Caco-2 (cell line): ENCODE measurements at regions of chr1 and their contacts with region 1.

Region 1: GRCh38 chr1:156356875-156357534 is 12.0 kb upstream of the RHBG start:
- DNase-seq: peak; percentile 87 to 90
- H3K4me3 ChIP-seq: peak overlapping the region; percentile 19
- H3K4me3 Mint-ChIP-seq: peak overlapping the region; percentile 67
- H3K27ac Mint-ChIP-seq: peak overlapping the region; percentile 60
- H3K4me1 ChIP-seq: 0 out of 2 replicates have a peak, but pooled peaks cover 3% of the 10 kb centered on the region
- H3K4me1 Mint-ChIP-seq: peaks cover 9% of the 10 kb centered on the region
- H3K27me3 ChIP-seq: no peaks in the 10 kb centered on the region
- H3K27me3 Mint-ChIP-seq: no peaks in the 10 kb centered on the region
- CTCF ChIP-seq: peak; percentile 93 to 99

Region 2: DNA sequence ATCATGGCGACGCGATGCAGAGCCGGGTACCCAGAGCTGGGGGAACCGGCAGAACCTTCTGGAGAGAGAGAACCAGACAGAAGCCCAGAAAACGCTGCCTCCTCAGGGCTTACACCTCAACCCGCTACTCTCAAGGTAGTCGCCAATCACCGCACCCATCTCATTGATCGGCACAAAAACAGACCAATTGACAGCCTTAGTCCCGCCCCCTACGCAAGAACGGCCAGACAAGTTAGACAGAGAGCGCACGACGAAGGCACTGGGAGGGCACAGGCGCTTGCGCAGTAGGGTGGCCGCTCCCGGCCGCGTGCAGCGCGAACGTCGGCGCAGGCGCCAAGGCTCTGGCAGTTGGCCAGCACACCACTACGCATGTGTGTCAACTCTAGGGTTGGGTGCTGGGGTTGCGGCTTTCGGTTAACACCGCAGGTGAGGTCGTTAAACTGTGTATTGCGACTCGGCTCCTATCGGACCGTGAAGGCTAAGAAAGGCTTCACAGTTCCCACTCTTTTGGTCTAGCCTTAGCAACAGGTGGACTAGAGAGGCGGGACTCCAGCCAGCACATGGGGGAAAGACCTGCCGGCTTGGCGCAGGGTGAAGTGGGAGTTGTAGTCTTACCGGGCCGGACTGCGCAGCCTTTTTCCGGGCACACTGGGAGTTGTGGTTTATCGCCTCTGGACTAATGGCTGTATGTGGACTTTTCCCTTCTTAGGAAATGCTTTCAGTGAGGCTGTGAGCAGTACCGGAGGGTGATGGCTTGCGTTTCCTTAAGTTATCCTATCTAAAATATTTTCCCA is 18.6 kb before region 1 on chr1 and contains the starts of genes CCT3 and TSACC:
- CTCF ChIA-PET with region 1: no interaction called
- POLR2A ChIA-PET with region 1: no interaction called
- intact Hi-C with region 1: loop called (anchors 1 kb)
- DNase-seq: peak; percentile 99 to 100
- H3K4me3 ChIP-seq: peak within 1 kb of the TSS; percentile 90
- H3K4me3 Mint-ChIP-seq: peak within 1 kb of the TSS; percentile 97
- H3K27ac Mint-ChIP-seq: peak within 1 kb of the TSS; percentile 75
- H3K4me1 ChIP-seq: no peaks in the 10 kb centered on the region
- H3K4me1 Mint-ChIP-seq: no peaks in the 10 kb centered on the region
- H3K27me3 ChIP-seq: no peaks in the 10 kb centered on the region
- H3K27me3 Mint-ChIP-seq: no peaks in the 10 kb centered on the region
- CTCF ChIP-seq: no peak
- total RNA-seq, gene CCT3: 340 and 380 TPM in 2 replicates
- total RNA-seq, gene TSACC: 2.8 and 3.9 TPM in 2 replicates

Region 3: DNA sequence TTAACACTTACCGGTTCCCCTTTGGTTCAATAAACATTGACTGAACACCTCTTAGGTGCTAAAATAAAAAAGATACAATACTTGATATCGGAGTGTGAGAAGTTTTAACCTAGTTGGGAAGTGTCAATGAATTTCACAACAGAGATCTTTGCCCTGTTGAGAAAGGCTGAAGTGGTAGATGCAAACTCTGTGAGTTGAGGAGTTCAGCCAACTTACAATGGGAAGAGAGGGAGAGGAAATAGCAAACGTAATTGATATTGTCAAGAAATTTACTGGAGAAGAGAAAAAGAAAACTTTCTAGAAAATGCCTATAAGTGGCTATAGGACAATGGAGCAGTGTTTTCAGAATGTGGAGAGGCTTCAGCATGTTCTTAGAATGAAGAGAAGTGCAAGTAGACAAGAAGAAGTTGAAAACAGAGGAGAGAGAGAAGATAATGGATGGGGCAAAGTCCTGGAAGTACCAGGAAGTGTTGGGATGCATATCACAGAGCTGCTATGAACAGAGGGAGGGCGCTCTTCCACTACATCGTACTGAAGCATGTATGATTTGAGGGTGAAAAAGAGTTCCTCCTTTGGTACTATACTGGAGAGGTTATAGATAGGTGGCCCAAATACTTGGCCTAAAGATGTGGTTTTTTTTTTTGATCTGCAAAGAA is 94.6 kb after region 1 on chr1:
- CTCF ChIA-PET with region 1: no interaction called
- POLR2A ChIA-PET with region 1: no interaction called
- intact Hi-C with region 1: no loop called
- DNase-seq: no peak
- H3K4me3 ChIP-seq: no peak overlapping the region
- H3K4me3 Mint-ChIP-seq: no peak overlapping the region
- H3K27ac Mint-ChIP-seq: no peak overlapping the region
- H3K4me1 ChIP-seq: peaks cover 9% of the 10 kb centered on the region; the same call in 1 of the 2 replicates
- H3K4me1 Mint-ChIP-seq: peaks cover 11% of the 10 kb centered on the region
- H3K27me3 ChIP-seq: no peaks in the 10 kb centered on the region
- H3K27me3 Mint-ChIP-seq: no peaks in the 10 kb centered on the region
- CTCF ChIP-seq: peak in 1 of 2 experiments; percentile 15